ENCODE measurements at regions of chr1 and their contacts with region 1.

Region 1: GRCh38 chr1:169106095-169106920 is at the start of gene ATP1B1:
- DNase-seq: peak; percentile 96
- ATAC-seq: peak; percentile 76
- H3K4me3 ChIP-seq: peak within 1 kb of the TSS; percentile 93
- H3K27ac ChIP-seq: peak within 1 kb of the TSS; percentile 64
- H3K4me1 ChIP-seq: peaks cover 52% of the 10 kb centered on the region
- H3K27me3 ChIP-seq: no peaks in the 10 kb centered on the region
- CTCF ChIP-seq: 0 out of 2 replicates have a peak, but pooled peaks have one; percentile 7
- total RNA-seq, gene ATP1B1: 68.7 and 76.6 TPM in 2 replicates

Region 2: DNA sequence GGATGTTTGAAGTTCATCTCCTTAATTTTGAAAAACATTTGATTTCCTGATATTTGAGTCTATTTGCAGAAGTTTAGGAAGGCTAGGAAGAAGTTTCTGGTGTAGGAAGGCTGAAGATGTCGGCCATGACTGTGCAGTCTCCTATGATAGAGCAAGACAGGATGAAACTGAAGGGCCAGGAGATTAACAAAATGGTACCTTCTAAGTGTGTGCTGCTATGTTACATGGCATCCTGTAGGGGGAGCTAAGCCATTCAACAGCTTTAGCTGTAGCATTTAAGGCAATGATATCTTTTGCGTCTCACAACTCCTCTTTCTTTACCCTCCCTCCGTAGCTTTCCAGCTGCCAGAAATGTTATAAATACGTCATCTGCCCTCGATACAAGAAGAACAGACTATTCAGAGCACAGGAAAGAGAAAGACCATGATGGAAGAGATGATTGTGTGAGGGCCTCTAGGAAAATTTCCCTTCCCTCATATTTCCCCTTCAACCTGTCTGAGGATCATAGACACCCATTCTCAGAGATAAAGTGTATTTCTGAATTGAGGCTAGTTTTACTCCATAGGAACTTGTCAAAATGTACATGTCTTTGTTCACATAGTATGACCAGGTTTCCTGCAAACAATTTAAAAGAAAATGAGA is 468.8 kb before region 1 on chr1:
- CTCF ChIA-PET with region 1: no interaction called
- POLR2A ChIA-PET with region 1: no interaction called
- intact Hi-C with region 1: loop called (anchors 2 kb)
- DNase-seq: peak; percentile 60
- ATAC-seq: no peak
- H3K4me3 ChIP-seq: no peak overlapping the region
- H3K27ac ChIP-seq: no peak overlapping the region
- H3K4me1 ChIP-seq: peaks cover 17% of the 10 kb centered on the region
- H3K27me3 ChIP-seq: no peaks in the 10 kb centered on the region
- CTCF ChIP-seq: peak; percentile 91

Region 3: DNA sequence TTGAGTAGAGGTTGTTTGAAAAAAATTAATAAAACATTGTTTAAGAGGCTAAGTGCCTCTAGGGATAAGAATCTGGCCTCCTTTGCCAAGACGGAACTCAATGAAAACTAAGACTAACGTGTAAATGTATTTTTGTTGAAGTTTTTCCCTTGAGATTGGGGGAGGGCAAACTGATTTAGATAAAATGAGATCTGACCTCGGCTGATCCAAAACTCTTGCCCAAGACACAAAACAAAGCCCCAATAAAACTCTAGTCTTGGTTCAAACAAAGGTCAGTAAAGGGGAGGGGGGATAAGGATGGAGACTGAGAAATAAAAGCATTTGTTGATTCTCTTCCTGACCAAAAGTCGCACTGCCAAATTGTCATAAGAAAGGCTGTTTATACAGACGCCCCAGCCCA is 242.5 kb before region 1 on chr1:
- CTCF ChIA-PET with region 1: no interaction called
- POLR2A ChIA-PET with region 1: no interaction called
- intact Hi-C with region 1: loop called (anchors 2 kb)
- DNase-seq: no peak
- ATAC-seq: no peak
- H3K4me3 ChIP-seq: no peak overlapping the region
- H3K27ac ChIP-seq: no peak overlapping the region
- H3K4me1 ChIP-seq: peaks cover 24% of the 10 kb centered on the region
- H3K27me3 ChIP-seq: no peaks in the 10 kb centered on the region
- CTCF ChIP-seq: no peak

Region 4: DNA sequence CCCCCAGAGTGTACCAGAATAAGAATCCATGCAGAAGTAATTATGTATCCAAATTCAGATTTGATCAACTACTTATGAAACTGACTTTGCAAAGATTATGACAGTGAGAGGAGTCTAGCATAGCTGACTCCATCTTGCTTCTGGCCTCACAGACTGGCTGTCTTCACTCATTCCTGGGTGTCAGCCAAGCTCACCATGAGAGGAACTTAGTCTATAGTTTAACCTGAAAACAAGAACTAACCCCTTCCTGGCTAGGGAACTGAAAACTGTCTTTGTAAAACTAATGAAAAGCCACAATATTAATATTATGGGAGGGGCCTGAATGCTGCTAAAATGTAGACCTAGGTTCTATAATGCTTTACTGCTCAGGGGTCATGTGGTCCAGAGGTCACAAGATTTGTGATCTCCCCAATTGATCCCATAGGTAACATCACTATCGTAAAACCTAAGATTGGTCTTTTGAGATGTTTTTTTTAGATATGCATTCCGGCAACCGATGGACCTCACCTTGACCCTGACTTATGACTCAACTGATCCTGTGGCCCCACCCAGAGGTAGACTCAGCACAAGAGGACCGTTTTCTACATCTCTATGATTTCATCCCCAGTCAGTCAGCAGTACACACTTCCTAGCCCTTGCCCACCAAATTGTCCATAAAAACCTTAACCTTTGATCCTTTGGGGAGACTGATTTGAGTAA is 55.3 kb after region 1 on chr1:
- CTCF ChIA-PET with region 1: no interaction called
- POLR2A ChIA-PET with region 1: no interaction called
- intact Hi-C with region 1: loop called (anchors 2 kb)
- DNase-seq: peak; percentile 58
- ATAC-seq: peak; percentile 59
- H3K4me3 ChIP-seq: no peak overlapping the region
- H3K27ac ChIP-seq: peak overlapping the region; percentile 70
- H3K4me1 ChIP-seq: peaks cover 32% of the 10 kb centered on the region
- H3K27me3 ChIP-seq: no peaks in the 10 kb centered on the region
- CTCF ChIP-seq: no peak

Region 5: GRCh38 chr1:169348383-169349036 is 242.2 kb after region 1 on chr1:
- CTCF ChIA-PET with region 1: interaction called, 6 read pairs
- POLR2A ChIA-PET with region 1: interaction called, 3 read pairs
- intact Hi-C with region 1: loop called (anchors 1 kb)
- DNase-seq: peak; percentile 84
- ATAC-seq: no peak
- H3K4me3 ChIP-seq: no peak overlapping the region
- H3K27ac ChIP-seq: no peak overlapping the region
- H3K4me1 ChIP-seq: 0 out of 2 replicates have a peak, but pooled peaks cover 2% of the 10 kb centered on the region
- H3K27me3 ChIP-seq: no peaks in the 10 kb centered on the region
- CTCF ChIP-seq: peak; percentile 97